ENCODE measurements at regions of chr9 and their contacts with region 1.

Region 1: GRCh38 chr9:113446323-113446740 is 17.2 kb upstream of the RGS3 start:
- DNase-seq: no peak
- H3K4me3 ChIP-seq: no peak overlapping the region
- H3K27me3 ChIP-seq: no peaks in the 10 kb centered on the region
- CTCF ChIP-seq: peak; percentile 49

Region 2: DNA sequence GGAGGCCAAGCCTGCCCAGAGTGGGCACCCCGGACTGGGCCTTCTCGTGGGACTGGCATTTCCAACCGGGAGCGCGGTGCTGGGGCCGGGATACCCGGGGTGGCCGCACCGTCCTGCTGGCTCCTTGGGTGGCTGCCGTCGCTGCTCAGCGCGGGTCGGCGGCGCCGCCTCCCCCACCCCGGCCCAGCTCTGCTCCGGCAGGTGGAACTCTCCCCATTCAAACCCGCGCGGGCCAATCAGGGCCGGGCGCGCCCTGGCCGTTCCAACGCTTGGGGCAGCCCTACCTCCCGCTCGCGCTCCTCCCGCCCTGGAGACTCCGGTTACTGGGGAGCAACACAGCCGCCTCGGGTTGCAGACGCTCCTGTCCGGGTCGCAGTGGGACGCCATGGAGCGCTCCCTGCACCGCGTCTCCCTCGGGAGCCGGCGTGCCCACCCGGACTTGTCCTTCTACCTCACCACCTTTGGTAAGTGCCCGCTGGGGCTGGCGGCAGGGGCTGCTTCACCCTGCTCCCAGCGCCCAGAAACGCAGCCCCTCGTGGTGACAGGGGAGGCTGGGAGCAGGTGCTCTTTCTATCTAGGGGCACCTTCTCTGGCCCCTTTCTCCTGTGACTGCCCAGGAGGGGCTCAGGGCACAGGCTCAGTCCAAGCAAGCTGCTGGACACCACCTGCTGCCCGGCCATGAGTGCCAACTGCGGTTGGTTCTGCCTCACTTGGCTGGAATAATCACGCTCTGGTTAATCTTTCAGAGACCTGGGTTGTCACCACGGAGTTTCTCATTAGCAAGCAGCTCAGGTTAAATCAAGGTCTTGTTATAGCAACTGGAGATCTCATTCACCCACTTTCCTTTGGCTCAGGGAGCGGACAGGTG is 17.3 kb after region 1 on chr9 and contains the start of gene RGS3:
- CTCF ChIA-PET with region 1: no interaction called
- POLR2A ChIA-PET with region 1: no interaction called
- DNase-seq: no peak
- H3K4me3 ChIP-seq: no peak within 1 kb of the TSS
- H3K27me3 ChIP-seq: peaks cover 10% of the 10 kb centered on the region
- CTCF ChIP-seq: no peak
- polyA plus RNA-seq, gene RGS3: 50.1 and 66.4 TPM in 2 replicates

Region 3: DNA sequence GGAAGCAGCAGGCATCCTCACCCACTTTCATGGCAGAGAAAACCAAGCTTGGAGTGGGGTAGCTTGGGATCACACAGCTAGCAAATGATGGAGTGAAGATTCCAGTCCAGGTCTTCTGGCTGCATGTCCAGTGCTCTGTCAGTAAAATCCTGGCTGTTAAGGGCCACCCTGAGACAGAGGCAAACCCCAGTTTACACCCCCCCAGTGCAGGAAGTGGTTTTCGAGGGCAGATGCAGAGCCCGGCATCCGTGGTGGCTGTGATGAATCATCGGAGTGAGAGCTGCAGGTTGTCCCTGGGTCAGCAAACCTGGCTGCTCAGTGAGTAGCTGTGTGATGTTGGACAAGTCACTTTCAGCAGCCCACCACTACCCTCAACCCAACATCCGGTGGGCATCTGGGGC is 132.6 kb after region 1 on chr9:
- CTCF ChIA-PET with region 1: interaction called, 288 read pairs
- POLR2A ChIA-PET with region 1: no interaction called
- DNase-seq: peak; percentile 84
- H3K4me3 ChIP-seq: no peak overlapping the region
- H3K27me3 ChIP-seq: no peaks in the 10 kb centered on the region
- CTCF ChIP-seq: no peak

Region 4: GRCh38 chr9:113602126-113603044 is 156.1 kb after region 1 on chr9:
- CTCF ChIA-PET with region 1: interaction called, 13 read pairs
- POLR2A ChIA-PET with region 1: no interaction called
- DNase-seq: no peak
- H3K4me3 ChIP-seq: no peak overlapping the region
- H3K27me3 ChIP-seq: no peaks in the 10 kb centered on the region
- CTCF ChIP-seq: no peak